Activated CD8-positive, alpha-beta T cell treated with anti-CD3 and anti-CD28 coated beads, Interleukin-2, amount 10 ng/mL, durations not matched to agents 7 days and 5 days (primary cell): ENCODE measurements at regions of chr7 and their contacts with region 1.

Region 1: DNA sequence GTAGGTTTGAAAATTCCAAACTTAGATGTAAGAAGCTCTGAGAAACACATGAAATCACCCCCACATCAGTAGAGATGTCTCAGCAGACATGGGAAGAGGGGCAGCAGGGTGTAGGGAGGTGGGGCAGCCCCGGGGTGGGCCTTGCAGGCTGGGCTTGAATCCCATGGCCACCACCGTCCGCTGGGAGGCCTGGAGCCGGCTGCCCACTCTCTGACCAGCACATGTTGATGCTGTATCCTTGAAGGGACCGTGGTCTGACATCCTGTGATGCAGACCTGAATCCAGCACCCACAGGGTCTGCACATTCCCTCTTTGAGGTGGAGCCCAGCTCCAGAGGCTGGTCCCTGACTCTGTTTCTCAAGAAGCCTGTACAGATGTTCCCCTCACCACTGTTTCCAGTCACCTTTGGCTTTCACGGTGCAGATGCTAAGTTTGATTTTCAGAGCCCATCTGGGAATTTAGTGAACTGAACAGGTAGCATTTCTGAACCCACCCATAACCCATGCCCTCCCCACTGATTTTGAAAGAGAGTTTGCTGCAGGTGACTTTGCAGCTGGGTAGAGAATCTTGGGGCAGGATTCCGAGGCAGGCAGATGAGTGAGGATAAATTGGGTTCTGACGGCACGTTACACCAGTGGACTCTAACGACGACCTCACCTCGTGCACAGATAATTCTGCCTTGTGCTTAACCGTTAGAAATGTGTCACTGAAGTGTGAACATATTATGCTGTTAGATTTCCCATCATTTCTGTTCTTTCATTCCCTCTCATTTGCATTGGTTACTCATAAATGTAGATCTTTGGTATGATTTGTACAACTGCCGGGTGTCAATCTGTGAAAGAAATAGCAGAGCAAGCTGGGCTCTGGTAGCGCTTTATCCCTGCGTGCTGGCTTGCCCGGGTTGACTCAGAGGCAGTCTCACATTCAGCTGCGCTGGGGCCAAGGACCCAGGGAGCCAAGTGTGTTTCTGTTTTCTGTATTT is 45.7 kb downstream of the IKZF1 start:
- DNase-seq: peak; percentile 82
- ATAC-seq: peak; percentile 67
- H3K4me3 Mint-ChIP-seq: peak overlapping the region; percentile 64
- H3K27ac Mint-ChIP-seq: peak overlapping the region; percentile 89
- H3K4me1 Mint-ChIP-seq: peaks cover 97% of the 10 kb centered on the region
- H3K27me3 Mint-ChIP-seq: no peaks in the 10 kb centered on the region

Region 2: GRCh38 chr7:50212666-50213621 is 137.3 kb before region 1 on chr7:
- CTCF ChIA-PET with region 1: no interaction called
- POLR2A ChIA-PET with region 1: no interaction called
- DNase-seq: peak; percentile 68
- ATAC-seq: peak; percentile 66
- H3K4me3 Mint-ChIP-seq: peak overlapping the region; percentile 9
- H3K27ac Mint-ChIP-seq: peak overlapping the region; percentile 94
- H3K4me1 Mint-ChIP-seq: peaks cover 99% of the 10 kb centered on the region
- H3K27me3 Mint-ChIP-seq: no peaks in the 10 kb centered on the region

Region 3: DNA sequence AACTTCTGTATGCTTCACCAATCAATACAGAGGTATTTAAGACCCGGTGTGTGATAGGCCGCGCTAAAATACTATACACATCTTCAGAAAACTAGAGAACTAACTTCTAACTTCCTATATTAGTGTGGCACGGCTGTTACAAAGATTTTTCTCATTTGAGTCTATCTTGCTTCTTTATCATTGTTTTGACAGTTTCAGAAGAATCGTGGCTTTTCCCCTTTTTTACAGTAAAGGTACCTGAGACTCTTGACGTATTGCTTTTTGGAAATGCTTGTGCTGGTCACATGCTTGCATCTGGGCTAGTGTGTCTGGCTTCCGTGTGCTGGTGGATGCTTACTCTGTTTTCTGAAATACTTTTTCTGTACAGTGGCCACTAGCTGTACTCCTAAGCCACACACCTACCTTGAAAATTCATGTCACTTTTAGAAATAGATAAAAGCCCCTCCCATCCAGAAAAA is 33.0 kb before region 1 on chr7:
- CTCF ChIA-PET with region 1: interaction called, 16 read pairs
- POLR2A ChIA-PET with region 1: interaction called, 128 read pairs
- DNase-seq: peak; percentile 71
- ATAC-seq: peak; percentile 71
- H3K4me3 Mint-ChIP-seq: peak overlapping the region; percentile 76
- H3K27ac Mint-ChIP-seq: peak overlapping the region; percentile 93
- H3K4me1 Mint-ChIP-seq: peaks cover 94% of the 10 kb centered on the region
- H3K27me3 Mint-ChIP-seq: no peaks in the 10 kb centered on the region

Region 4: GRCh38 chr7:50335795-50336754 is 14.2 kb before region 1 on chr7:
- CTCF ChIA-PET with region 1: interaction called, 322 read pairs
- POLR2A ChIA-PET with region 1: interaction called, 43 read pairs
- DNase-seq: peak; percentile 86
- ATAC-seq: peak; percentile 16
- H3K4me3 Mint-ChIP-seq: no peak overlapping the region
- H3K27ac Mint-ChIP-seq: no peak overlapping the region
- H3K4me1 Mint-ChIP-seq: no peaks in the 10 kb centered on the region
- H3K27me3 Mint-ChIP-seq: no peaks in the 10 kb centered on the region

Region 5: DNA sequence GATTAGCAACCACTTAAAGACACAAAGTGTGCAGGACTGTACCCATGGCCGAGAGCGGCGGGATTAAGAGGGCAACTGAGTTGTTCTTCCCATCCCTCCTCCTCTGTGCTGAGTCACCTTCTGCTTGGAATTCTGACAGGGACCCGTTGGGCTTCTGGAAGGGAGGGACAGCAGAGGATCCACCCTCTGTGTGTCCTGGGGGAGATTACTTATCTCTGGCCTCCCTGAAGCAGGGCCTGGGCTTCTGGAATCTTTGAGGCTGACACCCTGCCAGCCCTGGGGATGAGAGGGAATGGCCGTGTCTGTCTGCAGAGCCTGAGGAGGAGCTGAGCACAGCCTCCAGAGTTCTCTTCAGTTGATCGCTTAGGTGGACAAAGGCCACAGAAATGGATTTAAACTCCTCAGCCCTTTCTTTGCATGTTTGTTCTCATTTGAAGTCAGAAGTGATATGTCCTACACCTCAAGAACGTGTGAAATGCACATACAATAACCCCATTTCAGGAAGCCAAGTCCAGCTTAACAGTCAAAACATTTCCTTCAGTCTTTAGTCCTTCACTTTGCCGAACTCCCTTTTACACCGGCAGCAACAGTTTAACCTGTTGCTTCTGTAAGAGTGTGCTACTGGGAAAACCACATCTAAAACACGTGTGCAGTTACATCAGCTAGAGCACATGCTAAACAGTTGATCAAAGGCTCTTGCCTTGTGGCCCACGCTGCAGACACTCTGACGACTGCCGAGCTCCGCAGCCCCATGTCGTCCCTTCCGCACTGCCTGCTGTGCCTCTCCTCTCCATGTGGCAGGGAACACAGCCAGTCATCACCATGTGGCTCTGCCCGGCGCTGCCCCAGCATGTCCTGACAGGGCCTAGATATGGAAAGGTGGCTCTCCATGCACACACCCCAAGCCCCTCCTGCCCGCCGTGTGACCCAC is 10.0 kb after region 1 on chr7:
- CTCF ChIA-PET with region 1: interaction called, 322 read pairs
- POLR2A ChIA-PET with region 1: interaction called, 101 read pairs
- DNase-seq: peak; percentile 89
- ATAC-seq: peak; percentile 87
- H3K4me3 Mint-ChIP-seq: peak overlapping the region; percentile 68
- H3K27ac Mint-ChIP-seq: peak overlapping the region; percentile 96
- H3K4me1 Mint-ChIP-seq: peaks cover 96% of the 10 kb centered on the region
- H3K27me3 Mint-ChIP-seq: no peaks in the 10 kb centered on the region